SK-N-SH (cell line): ENCODE measurements at regions of chr1 and their contacts with region 1.

Region 1: DNA sequence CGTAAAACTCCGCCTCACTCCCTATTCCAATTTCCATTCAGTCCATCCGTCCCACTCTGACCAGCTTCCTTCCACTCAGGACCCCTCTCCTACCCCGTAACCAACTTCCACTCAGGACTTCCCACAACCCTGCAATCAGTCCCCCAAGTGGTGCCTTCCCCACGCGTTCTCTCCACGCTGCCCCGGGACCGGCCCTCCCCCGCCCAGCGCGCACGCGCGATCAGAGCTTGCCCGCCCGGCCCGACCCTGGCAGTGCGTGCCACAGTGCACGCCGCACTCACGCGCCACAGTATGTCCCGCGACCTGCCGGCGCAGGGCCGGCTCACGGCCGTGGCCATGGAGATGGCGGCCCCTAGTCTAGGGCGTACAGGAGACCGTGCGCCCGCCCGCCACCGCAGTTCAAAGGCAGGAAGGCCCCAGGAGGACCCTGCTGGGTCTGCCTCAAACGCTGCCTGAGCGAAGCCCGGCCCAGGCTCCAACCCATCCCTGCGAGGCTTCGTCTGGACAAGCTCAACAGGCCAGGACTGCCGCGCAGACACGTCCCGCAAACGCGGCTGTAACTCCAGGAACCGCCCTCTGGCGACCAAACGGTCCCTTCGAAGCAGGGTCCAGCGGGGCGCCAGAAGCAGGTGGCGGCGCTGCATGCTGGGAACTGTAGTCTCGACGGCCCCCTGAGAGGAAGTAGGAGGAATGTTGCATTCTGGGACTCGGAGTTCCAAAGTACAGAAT is at the start of gene NDC1:
- DNase-seq: peak; percentile 92
- H3K4me3 ChIP-seq: peak within 1 kb of the TSS; percentile 63 to 95
- H3K27ac ChIP-seq: peak within 1 kb of the TSS; percentile 90 to 99
- H3K4me1 ChIP-seq: peaks cover 3 to 12% of the 10 kb centered on the region in 2 experiments; a peak in 3 of 4 replicates
- H3K27me3 ChIP-seq: no peaks in the 10 kb centered on the region
- CTCF ChIP-seq: peak; percentile 25; the same call in 1 of the 2 replicates
- EP300 ChIP-seq: no peak
- RAD21 ChIP-seq: no peak
- polyA plus RNA-seq, gene NDC1: 11.5 and 14.6 TPM in 2 replicates

Region 2: DNA sequence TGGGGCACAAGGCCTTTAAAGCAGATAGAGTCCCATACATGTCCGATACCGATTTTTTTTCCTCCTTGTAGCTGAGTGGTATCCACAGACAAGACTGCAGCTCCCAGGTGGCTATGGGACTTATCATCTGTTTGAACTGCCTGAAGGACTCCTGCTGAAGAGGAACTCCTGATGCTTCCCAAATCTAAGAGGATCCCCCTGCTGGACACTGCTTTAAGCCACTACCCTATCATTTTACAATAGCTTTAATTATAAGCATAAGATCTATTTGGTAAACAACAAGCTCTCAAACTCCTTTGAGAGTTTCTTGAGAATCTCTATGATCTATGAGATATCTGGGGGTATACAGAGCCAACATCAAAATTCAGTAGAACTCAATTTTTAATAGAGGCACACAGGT is 11.7 kb before region 1 on chr1:
- CTCF ChIA-PET with region 1: interaction called, 13 read pairs
- POLR2A ChIA-PET with region 1: no interaction called
- DNase-seq: no peak
- H3K4me3 ChIP-seq: no peak overlapping the region
- H3K27ac ChIP-seq: no peak overlapping the region
- H3K4me1 ChIP-seq: no peaks in the 10 kb centered on the region
- H3K27me3 ChIP-seq: no peaks in the 10 kb centered on the region
- CTCF ChIP-seq: peak; percentile 44
- EP300 ChIP-seq: no peak
- RAD21 ChIP-seq: no peak